H1 (cell line): ENCODE measurements at regions of chr7 and their contacts with region 1.

Region 1: GRCh38 chr7:42981615-42982014 is 49.4 kb downstream of the MRPL32 start:
- DNase-seq: no peak
- H3K4me3 ChIP-seq: no peak overlapping the region
- H3K27ac ChIP-seq: no peak overlapping the region
- H3K4me1 ChIP-seq: no peaks in the 10 kb centered on the region
- H3K27me3 ChIP-seq: no peaks in the 10 kb centered on the region
- CTCF ChIP-seq: no peak
- EP300 ChIP-seq: no peak
- POLR2A ChIP-seq: no peak
- RAD21 ChIP-seq: no peak

Region 2: GRCh38 chr7:42893346-42894242 is 88.0 kb before region 1 on chr7:
- CTCF ChIA-PET with region 1: no interaction called
- POLR2A ChIA-PET with region 1: no interaction called
- DNase-seq: no peak
- H3K4me3 ChIP-seq: no peak overlapping the region; a peak in 1 of 8 replicates
- H3K27ac ChIP-seq: no peak overlapping the region; the same call in 1 of the 2 replicates
- H3K4me1 ChIP-seq: peaks cover 0 to 2% (median 0%) of the 10 kb centered on the region in 4 experiments; a peak in 3 of 7 replicates
- H3K27me3 ChIP-seq: no peaks in the 10 kb centered on the region
- CTCF ChIP-seq: no peak
- EP300 ChIP-seq: peak in 1 of 2 experiments; percentile 34; a peak in 1 of 3 replicates
- POLR2A ChIP-seq: no peak
- RAD21 ChIP-seq: no peak

Region 3: DNA sequence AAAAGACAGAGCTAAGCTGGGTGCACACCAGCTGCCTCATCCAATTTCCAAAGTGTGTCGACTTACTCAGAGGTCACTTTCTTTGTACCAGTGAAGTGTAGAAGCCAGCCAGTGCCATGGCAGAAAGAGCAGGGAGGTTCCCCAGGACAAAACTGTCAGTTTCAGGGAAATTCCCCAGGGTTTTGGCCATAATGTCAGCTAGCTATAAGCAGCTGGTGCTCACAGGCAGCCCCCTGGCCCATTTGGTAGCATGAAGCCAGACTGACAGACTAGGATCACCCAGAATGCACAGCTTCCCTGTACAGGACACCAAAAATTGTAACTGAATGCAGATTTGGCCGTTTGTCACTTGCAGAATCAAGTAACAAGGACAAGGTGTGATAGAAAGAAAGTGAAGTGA is 20.9 kb before region 1 on chr7:
- CTCF ChIA-PET with region 1: interaction called, 22 read pairs
- POLR2A ChIA-PET with region 1: no interaction called
- DNase-seq: no peak
- H3K4me3 ChIP-seq: no peak overlapping the region
- H3K27ac ChIP-seq: no peak overlapping the region
- H3K4me1 ChIP-seq: peaks cover 0 to 3% (median under 1%) of the 10 kb centered on the region in 4 experiments; a peak in 1 of 7 replicates
- H3K27me3 ChIP-seq: no peaks in the 10 kb centered on the region
- CTCF ChIP-seq: no peak
- EP300 ChIP-seq: no peak
- POLR2A ChIP-seq: no peak
- RAD21 ChIP-seq: no peak

Region 4: GRCh38 chr7:42993038-42993437 is 11.4 kb after region 1 on chr7:
- CTCF ChIA-PET with region 1: interaction called, 20 read pairs
- POLR2A ChIA-PET with region 1: no interaction called
- DNase-seq: peak in 1 of 2 experiments; percentile 31
- H3K4me3 ChIP-seq: no peak overlapping the region
- H3K27ac ChIP-seq: no peak overlapping the region
- H3K4me1 ChIP-seq: peaks cover 0 to 13% (median 3%) of the 10 kb centered on the region in 4 experiments; a peak in 2 of 7 replicates
- H3K27me3 ChIP-seq: no peaks in the 10 kb centered on the region
- CTCF ChIP-seq: peak; percentile 32 to 70 (median 47)
- EP300 ChIP-seq: no peak
- POLR2A ChIP-seq: no peak
- RAD21 ChIP-seq: peak; percentile 56 to 65

Region 5: DNA sequence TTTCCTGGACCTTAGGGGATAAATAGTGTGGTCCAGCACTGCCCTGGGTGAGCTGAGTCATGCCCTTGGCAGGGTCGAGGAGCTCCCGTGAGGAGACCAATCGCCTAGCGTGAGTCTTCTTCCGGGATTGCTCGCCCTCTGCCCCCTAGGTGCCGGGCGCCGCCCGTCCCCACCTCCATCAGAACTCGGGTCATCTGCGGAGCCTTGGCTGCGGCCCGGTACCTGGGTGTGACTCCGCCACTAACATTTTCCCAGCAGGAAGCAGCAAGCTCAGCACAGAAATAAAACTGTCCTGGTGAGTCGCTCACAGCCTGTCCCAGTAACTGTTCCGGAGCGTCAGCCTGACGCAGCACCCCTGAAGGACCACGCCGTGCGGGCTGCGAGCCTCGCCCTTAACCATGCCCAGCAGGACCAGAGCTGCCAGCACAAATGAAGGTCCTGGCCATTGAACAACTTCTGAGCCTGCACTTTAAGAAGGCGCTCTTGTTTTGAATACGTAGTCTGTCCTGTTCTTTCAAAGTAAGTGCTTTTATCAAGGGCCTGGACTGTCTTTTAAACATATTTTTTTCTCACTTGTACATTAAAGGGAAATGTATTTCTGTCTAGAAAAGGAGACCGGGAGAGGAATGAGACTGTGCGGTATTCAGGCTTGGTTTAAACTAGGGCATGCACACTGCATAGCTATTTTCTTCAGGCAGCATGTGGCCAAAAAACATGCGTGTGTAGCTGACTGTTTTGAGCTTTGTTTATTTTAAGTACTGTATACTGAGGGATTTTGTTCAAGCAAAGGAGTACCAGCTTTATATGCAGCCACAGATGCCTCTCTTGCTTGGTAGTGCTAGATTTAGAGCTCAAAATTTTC is 267.6 kb after region 1 on chr7:
- CTCF ChIA-PET with region 1: no interaction called
- POLR2A ChIA-PET with region 1: no interaction called
- DNase-seq: no peak
- H3K4me3 ChIP-seq: no peak overlapping the region
- H3K27ac ChIP-seq: peak overlapping the region; percentile 40; the same call in 1 of the 2 replicates
- H3K4me1 ChIP-seq: peaks cover 0 to 6% (median 2%) of the 10 kb centered on the region in 4 experiments; a peak in 3 of 7 replicates
- H3K27me3 ChIP-seq: no peaks in the 10 kb centered on the region
- CTCF ChIP-seq: no peak
- EP300 ChIP-seq: no peak
- POLR2A ChIP-seq: no peak
- RAD21 ChIP-seq: no peak